ENCODE measurements at regions of chr5 and their contacts with region 1.

Region 1: GRCh38 chr5:66814146-66814991 is 218.2 kb downstream of the MAST4 start:
- DNase-seq: no peak
- H3K4me3 ChIP-seq: no peak overlapping the region
- H3K27ac ChIP-seq: no peak overlapping the region
- H3K4me1 ChIP-seq: no peaks in the 10 kb centered on the region
- H3K27me3 ChIP-seq: no peaks in the 10 kb centered on the region
- CTCF ChIP-seq: peak; percentile 34 to 72 (median 71)

Region 2: DNA sequence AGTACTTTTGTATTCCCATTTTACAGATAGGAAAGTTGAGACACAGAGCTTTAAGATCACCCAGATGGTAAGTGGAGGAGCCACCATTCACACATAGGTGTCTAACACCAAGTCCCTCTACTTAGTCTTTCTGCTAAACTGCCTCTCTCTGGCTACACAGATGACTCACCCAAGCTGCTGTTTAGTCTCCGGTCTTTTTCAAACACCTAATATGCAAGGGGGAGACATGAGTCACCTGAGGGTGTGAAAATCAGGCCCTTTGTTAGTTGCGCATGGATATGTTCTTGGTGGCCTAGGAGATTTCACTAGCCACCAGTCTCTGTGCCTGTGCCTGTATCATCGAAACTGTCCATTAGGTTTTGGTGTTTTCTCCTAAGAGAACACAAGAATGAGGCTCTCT is 100.4 kb before region 1 on chr5:
- intact Hi-C with region 1: no loop called
- DNase-seq: no peak
- H3K4me3 ChIP-seq: no peak overlapping the region
- H3K27ac ChIP-seq: no peak overlapping the region
- H3K4me1 ChIP-seq: no peaks in the 10 kb centered on the region
- H3K27me3 ChIP-seq: no peaks in the 10 kb centered on the region
- CTCF ChIP-seq: no peak

Region 3: GRCh38 chr5:67156976-67157583 is 342.7 kb after region 1 on chr5:
- intact Hi-C with region 1: loop called (anchors 5 kb)
- DNase-seq: no peak
- H3K4me3 ChIP-seq: no peak overlapping the region
- H3K27ac ChIP-seq: no peak overlapping the region
- H3K4me1 ChIP-seq: peaks cover 0 to 5% of the 10 kb centered on the region in 2 donors
- H3K27me3 ChIP-seq: no peaks in the 10 kb centered on the region
- CTCF ChIP-seq: peak; percentile 62 to 81 (median 74)